ENCODE measurements at regions of chr10 and their contacts with region 1.

Region 1: DNA sequence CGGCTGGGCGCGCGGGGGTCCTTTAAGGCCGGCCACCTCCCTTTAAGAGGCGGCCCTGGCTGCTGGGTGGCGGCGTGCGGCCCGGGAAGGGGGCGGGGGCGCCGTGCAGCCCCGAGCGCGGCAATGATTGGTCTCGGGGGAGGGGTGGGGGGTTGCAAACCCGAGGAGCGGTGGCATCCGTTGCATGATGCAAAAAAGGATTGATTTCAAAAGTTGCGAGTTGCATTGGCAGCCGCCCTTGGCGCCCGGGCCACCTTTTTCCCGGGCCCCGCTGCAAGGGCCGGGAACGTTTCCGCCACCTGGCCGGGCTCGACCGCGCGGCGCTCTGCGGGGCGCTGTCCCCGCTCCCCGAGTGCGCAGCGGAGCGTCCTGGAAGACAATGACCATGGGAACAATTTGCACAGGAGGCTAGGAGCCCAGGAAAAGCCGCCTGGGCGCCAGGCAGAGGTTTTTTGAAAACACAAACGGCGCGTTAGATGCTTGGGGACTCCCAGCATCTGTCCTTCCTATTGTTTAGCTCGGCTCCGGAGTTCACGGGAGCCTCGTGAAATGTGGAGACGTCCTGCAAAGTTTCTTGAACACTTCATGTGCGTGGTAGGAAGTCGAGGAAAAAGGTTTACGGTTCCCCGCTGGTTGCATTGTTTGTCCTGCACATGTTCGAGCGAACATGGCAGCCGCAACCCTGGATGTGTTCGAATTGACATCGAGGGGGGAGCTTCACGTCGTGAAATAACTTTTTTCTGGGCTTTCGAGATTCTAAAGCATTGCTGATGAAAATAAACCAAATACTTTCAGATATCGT is at the start of gene SEPHS1:
- DNase-seq: peak; percentile 77
- H3K4me3 Mint-ChIP-seq: peak within 1 kb of the TSS; percentile 91
- H3K27ac Mint-ChIP-seq: peak within 1 kb of the TSS; percentile 90
- H3K4me1 Mint-ChIP-seq: peaks cover 44% of the 10 kb centered on the region
- H3K27me3 Mint-ChIP-seq: peaks cover 2% of the 10 kb centered on the region
- total RNA-seq, gene SEPHS1: 54.4 and 56.7 TPM in 2 replicates

Region 2: DNA sequence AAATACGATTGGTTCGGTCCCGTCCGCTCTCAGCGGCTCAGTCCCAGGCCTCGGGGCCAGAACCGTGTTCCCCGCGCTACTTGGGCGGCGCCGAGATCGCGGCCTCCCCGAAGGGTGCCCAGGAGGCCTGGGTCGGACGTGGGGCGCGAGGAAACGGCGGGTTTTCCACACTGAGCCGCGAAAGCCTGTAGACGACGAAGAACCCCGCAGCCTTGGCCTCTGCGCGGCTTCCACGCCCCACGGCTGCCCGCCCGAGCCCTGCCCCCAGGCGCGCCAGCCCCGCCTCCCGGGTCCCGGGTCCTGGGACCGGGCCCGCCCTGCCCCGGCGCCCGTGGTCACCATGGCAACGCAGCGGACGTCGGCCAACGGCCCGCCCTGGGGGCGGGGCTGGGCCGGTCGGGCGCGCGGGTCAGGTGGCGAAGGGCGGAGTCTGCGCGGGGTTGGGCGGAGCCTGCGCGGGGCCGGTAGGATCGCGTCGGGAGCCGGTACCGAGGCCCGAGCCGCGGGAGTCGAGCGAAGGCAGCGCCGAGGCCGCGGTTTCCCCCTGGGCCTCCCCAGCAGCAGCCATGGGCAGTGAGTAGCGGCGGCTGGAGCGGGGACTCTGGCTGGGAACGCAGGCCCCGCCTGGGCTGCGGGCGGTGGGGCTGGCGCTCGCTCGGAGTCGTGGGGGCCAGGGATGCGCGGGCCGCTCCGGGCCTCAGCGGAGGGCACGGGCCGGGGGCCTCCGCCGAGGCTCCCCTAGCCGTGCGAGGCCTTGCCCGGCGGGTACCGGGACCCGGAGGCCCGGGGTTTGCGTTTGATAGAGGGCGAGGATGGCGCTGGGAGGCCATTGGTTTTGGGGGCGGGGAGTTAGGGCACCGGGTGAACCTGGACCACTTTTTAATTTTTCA is 1219.0 kb before region 1 on chr10 and contains the start of gene SEC61A2:
- intact Hi-C with region 1: loop called (anchors 2 kb)
- DNase-seq: peak; percentile 99
- H3K4me3 Mint-ChIP-seq: peak within 1 kb of the TSS; percentile 94
- H3K27ac Mint-ChIP-seq: peak within 1 kb of the TSS; percentile 90
- H3K4me1 Mint-ChIP-seq: peaks cover 49% of the 10 kb centered on the region
- H3K27me3 Mint-ChIP-seq: no peaks in the 10 kb centered on the region
- total RNA-seq, gene SEC61A2: 21.9 and 22.1 TPM in 2 replicates

Region 3: DNA sequence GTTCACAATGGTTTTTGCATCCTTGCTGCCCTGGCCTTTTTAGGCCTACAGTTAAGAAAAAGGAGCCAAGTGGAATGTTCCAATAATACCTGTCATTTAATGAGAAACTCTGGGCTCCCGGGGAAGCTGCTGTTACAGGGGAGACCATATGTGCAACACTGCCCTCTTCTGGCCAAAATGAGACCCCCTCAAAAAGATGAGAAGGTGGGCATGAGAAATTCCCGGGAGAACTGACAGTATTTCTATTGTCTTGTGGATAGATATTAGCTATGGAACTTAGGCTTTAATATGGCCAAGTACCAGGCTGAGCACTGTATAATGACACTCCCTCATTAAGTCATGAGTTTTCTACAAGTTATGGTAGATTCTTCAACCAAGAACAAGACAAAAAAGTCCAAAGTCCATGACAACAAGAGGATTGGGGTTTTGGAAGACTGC is 446.3 kb before region 1 on chr10:
- intact Hi-C with region 1: no loop called
- DNase-seq: peak; percentile 25
- H3K4me3 Mint-ChIP-seq: no peak overlapping the region
- H3K27ac Mint-ChIP-seq: no peak overlapping the region
- H3K4me1 Mint-ChIP-seq: no peaks in the 10 kb centered on the region
- H3K27me3 Mint-ChIP-seq: no peaks in the 10 kb centered on the region

Region 4: DNA sequence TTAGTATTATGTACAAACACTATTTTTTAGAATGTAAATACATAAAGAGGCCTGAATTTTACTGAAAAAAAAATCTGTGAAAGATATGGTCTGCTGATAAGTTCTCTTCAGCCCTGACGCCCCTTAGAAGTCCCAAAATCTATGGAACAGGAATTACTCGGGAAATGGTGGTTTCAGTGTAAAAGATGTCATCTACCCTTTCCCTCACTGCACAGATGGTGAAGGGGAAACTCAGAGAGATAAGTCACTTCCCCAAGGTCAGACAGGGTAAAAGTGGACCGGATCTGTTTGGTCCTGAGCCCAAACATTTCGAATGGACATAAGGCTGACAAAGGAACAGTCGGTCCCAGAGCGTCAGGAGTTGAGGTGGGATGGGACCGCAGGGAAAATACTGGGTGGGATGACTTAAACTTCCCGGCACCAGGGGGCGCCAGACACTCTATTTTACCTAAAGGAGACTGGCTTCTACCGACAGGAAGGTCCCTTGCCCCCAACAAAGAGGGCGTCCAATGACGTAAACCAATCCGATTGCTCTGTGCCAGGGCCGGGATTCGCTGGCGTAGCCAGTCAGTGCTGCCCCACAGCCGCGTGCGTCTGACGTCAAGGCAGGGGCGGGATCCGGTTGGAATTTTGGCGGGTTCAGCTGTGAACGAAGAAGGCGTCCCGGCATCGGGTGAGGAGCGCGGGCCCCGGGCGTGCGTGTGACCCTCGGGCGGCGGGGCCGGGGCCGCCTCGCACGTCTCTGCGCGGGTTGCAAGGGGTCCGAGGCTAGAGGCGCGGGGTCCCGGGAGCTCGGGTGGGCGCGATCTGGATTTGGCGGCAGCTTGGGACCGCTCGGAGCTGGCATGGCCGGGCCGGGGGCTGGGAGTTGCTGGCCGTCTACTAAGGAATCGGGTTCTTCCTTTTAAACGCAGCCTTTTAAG is 187.2 kb before region 1 on chr10 and contains the start of gene MCM10:
- intact Hi-C with region 1: loop called (anchors 1 kb)
- DNase-seq: peak; percentile 98
- H3K4me3 Mint-ChIP-seq: peak within 1 kb of the TSS; percentile 93
- H3K27ac Mint-ChIP-seq: peak within 1 kb of the TSS; percentile 94
- H3K4me1 Mint-ChIP-seq: peaks cover 57% of the 10 kb centered on the region
- H3K27me3 Mint-ChIP-seq: no peaks in the 10 kb centered on the region
- total RNA-seq, gene MCM10: 104 and 106 TPM in 2 replicates

Region 5: GRCh38 chr10:13371897-13372470 is 23.6 kb after region 1 on chr10:
- intact Hi-C with region 1: loop called (anchors 1 kb)
- DNase-seq: peak; percentile 63
- H3K4me3 Mint-ChIP-seq: no peak overlapping the region
- H3K27ac Mint-ChIP-seq: no peak overlapping the region
- H3K4me1 Mint-ChIP-seq: no peaks in the 10 kb centered on the region
- H3K27me3 Mint-ChIP-seq: peaks cover 10% of the 10 kb centered on the region

Region 6: DNA sequence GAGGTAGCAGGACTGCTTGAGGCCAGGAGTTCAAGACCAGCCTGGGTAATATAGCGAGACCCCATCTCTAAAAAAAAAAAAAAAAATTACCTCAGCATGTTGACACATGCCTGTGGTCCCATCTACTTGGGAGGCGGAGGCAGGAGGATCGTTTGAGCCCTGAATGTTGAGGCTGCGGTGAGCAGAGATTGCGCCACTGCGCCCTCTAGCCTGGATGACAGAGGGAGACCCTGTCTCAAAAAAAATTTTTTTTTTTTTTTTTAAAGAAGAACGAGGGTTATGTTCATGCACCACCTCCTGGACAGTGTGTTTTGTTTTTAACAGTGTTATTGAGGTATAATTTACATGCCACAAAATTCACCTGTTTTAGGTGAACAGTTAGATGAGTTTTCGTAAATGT is 50.8 kb after region 1 on chr10:
- intact Hi-C with region 1: no loop called
- DNase-seq: no peak
- H3K4me3 Mint-ChIP-seq: no peak overlapping the region
- H3K27ac Mint-ChIP-seq: no peak overlapping the region
- H3K4me1 Mint-ChIP-seq: no peaks in the 10 kb centered on the region
- H3K27me3 Mint-ChIP-seq: no peaks in the 10 kb centered on the region

Region 7: DNA sequence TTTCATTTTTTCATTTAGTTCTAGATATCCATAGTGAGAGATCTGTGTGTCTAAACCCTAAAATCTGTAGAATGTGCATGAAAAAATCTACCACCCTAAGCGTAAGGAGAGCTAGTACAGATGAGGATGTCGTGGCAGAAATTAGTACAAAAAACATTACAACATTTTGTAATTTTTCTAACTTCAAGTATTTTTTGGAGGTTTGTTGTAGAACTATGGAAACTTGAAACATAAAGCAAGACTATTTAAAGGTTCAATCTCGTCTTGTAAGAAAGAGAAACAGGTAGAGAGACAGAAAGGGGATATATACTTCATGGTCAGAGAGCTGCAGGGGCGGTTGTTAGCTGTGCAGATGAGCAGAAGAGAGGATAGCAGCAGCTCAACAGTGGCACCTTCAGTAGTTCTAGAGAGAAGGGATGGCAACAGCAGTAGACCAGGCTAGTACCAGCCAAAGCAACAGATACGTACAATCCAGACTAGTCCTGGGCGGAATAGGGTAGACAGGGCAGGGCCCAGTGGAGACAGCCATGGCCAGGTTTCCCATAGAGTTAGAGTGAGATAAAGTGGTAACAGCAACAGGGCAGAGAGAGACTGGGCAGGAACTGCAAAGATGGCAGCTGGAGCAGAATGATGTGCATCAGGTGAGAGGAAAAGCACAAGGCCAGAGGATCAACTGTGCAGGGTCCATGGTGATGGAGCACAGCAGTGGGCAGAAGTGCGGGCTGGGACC is 837.1 kb after region 1 on chr10:
- intact Hi-C with region 1: loop called (anchors 2 kb)
- DNase-seq: peak; percentile 52
- H3K4me3 Mint-ChIP-seq: peak overlapping the region; percentile 46
- H3K27ac Mint-ChIP-seq: peak overlapping the region; percentile 92
- H3K4me1 Mint-ChIP-seq: peaks cover 20% of the 10 kb centered on the region
- H3K27me3 Mint-ChIP-seq: peaks cover 48% of the 10 kb centered on the region

Measured in activated T-helper 1 cell treated with anti-CD3 and anti-CD28 coated beads, Interleukin-12 subunit alpha, Interleukin-12 subunit beta, Interleukin-2, Interleukin-4 antibody, amounts not matched to agents 30 ng/mL and 10 ng/mL and 1 ng/mL, durations not matched to agents 14 hours and 24 hours and 36 hours (primary cell).